Activated CD8-positive, alpha-beta T cell treated with anti-CD3 and anti-CD28 coated beads for 36 hours (primary cell): ENCODE measurements at regions of chr13 and their contacts with region 1.

Region 1: DNA sequence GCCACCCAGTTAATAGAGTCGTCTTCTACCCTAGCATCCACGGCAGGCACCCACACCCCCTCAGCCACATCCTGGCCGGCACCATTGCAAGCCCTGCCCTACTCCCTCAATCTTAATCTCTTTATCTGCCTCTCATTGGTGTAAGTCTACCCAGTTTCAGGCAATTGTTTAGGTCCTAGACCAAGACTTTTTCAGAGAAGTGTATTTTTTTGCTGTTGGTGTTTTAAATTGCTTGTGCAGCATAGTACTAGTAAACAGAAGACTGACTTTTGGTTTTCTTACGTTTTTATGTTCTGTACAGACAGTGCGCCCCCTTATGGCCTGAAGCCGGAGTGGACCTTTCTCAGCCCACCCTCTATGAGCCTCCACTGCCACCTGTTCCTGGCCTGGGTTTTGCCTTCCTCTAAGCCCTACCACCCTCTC is 2.3 kb upstream of the LCP1 start:
- DNase-seq: peak; percentile 91
- ATAC-seq: peak; percentile 59
- H3K4me3 Mint-ChIP-seq: peak overlapping the region; percentile 99
- H3K27ac Mint-ChIP-seq: peak overlapping the region; percentile 99
- H3K4me1 Mint-ChIP-seq: peaks cover 37% of the 10 kb centered on the region
- H3K27me3 Mint-ChIP-seq: peaks cover 3% of the 10 kb centered on the region
- CTCF ChIP-seq: peak; percentile 72

Region 2: GRCh38 chr13:45989607-45990006 is 194.7 kb before region 1 on chr13:
- CTCF ChIA-PET with region 1: no interaction called
- POLR2A ChIA-PET with region 1: no interaction called
- intact Hi-C with region 1: no loop called
- DNase-seq: no peak
- ATAC-seq: no peak
- H3K4me3 Mint-ChIP-seq: no peak overlapping the region
- H3K27ac Mint-ChIP-seq: no peak overlapping the region
- H3K4me1 Mint-ChIP-seq: peaks cover 2% of the 10 kb centered on the region
- H3K27me3 Mint-ChIP-seq: no peaks in the 10 kb centered on the region
- CTCF ChIP-seq: no peak

Region 3: DNA sequence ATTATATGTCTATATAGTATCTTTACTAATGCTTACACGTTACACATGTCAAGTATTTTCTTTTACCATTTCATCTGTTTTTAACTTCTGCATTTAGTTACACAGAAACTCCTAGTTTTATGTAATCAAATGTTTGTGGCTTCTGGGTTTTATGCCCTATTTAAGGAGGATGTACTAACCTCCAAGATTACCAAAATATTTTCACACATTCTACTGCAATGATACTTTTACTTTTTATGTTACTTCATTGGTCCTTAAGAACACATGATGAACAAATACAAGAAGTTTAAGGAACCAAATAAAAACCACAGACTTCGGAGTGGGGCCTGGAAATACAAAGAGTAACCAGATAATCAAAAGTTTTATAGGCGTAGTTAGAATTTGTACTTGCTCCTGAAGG is 168.9 kb before region 1 on chr13:
- CTCF ChIA-PET with region 1: no interaction called
- POLR2A ChIA-PET with region 1: no interaction called
- intact Hi-C with region 1: no loop called
- DNase-seq: no peak
- ATAC-seq: no peak
- H3K4me3 Mint-ChIP-seq: no peak overlapping the region
- H3K27ac Mint-ChIP-seq: no peak overlapping the region
- H3K4me1 Mint-ChIP-seq: no peaks in the 10 kb centered on the region
- H3K27me3 Mint-ChIP-seq: no peaks in the 10 kb centered on the region
- CTCF ChIP-seq: no peak

Region 4: DNA sequence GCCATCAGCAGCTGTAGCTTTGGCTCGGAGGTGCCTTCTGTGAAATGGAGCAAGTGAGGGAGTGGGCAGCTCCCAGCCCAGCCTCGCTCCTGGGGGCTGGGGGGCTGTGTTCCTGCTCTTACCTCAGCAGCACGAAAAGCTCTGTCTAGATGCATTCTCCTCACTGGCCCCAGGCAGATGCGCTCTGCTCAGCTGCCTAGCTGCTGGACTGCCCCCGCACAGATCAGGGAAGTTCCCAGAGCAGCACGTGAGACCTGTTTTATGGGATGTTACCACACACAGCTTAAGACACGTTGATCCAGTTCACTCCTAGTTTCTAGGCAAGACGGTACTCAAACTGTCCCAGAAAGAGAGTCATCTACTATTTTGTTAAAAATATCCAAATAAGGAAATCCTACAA is 15.9 kb before region 1 on chr13:
- CTCF ChIA-PET with region 1: interaction called, 8 read pairs
- POLR2A ChIA-PET with region 1: interaction called, 137 read pairs
- intact Hi-C with region 1: loop called (anchors 2 kb)
- DNase-seq: peak; percentile 74
- ATAC-seq: peak; percentile 38
- H3K4me3 Mint-ChIP-seq: peak overlapping the region; percentile 75
- H3K27ac Mint-ChIP-seq: peak overlapping the region; percentile 88
- H3K4me1 Mint-ChIP-seq: peaks cover 88% of the 10 kb centered on the region
- H3K27me3 Mint-ChIP-seq: no peaks in the 10 kb centered on the region
- CTCF ChIP-seq: no peak

Region 5: GRCh38 chr13:46198505-46199193 is 14.4 kb after region 1 on chr13:
- CTCF ChIA-PET with region 1: interaction called, 16 read pairs
- POLR2A ChIA-PET with region 1: interaction called, 11 read pairs
- intact Hi-C with region 1: no loop called
- DNase-seq: no peak
- ATAC-seq: no peak
- H3K4me3 Mint-ChIP-seq: no peak overlapping the region
- H3K27ac Mint-ChIP-seq: no peak overlapping the region
- H3K4me1 Mint-ChIP-seq: peaks cover 35% of the 10 kb centered on the region
- H3K27me3 Mint-ChIP-seq: no peaks in the 10 kb centered on the region
- CTCF ChIP-seq: no peak

Region 6: DNA sequence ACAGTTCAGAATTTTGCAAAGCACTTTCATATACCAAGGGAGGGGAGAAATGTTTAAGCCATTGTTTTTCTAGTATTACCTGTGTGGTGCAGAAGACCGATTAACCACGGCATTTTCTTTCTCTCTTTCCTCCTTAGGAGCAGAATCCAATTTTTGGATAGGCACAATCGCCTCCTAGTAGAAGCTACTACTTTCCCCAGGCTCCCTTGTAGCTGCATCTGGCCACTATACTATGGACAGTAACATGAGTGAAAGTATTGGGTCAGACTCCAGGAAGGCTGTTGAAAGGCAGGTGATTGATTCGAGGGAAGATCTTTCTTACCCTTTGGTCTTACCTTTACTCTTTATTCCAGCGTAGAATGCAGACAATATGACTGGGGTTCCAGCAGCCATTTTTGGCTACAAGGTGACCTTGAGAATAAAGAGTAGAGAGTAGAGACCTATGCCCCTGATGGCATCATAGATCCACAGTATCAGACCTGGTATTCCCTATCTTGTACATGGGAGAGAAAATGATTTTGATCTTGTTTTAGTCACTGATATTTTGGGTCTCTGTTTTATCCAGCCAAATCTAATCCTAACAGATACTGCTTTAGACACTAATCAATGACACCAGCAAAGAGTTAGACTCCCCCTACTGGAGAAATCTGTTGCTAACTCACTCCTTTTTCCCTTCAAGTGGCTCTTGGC is 104.4 kb after region 1 on chr13:
- CTCF ChIA-PET with region 1: interaction called, 4 read pairs
- POLR2A ChIA-PET with region 1: no interaction called
- intact Hi-C with region 1: loop called (anchors 5 kb)
- DNase-seq: no peak
- ATAC-seq: peak; percentile 88
- H3K4me3 Mint-ChIP-seq: no peak overlapping the region
- H3K27ac Mint-ChIP-seq: no peak overlapping the region
- H3K4me1 Mint-ChIP-seq: peaks cover 12% of the 10 kb centered on the region
- H3K27me3 Mint-ChIP-seq: no peaks in the 10 kb centered on the region
- CTCF ChIP-seq: peak; percentile 94

Region 7: GRCh38 chr13:46530084-46530935 is 346.0 kb after region 1 on chr13:
- CTCF ChIA-PET with region 1: no interaction called
- POLR2A ChIA-PET with region 1: no interaction called
- intact Hi-C with region 1: no loop called
- DNase-seq: no peak
- ATAC-seq: peak; percentile 68
- H3K4me3 Mint-ChIP-seq: no peak overlapping the region
- H3K27ac Mint-ChIP-seq: peak overlapping the region; percentile 40
- H3K4me1 Mint-ChIP-seq: peaks cover 22% of the 10 kb centered on the region
- H3K27me3 Mint-ChIP-seq: peaks cover 5% of the 10 kb centered on the region
- CTCF ChIP-seq: no peak